ENCODE measurements at regions of chr1 and their contacts with region 1.

Region 1: DNA sequence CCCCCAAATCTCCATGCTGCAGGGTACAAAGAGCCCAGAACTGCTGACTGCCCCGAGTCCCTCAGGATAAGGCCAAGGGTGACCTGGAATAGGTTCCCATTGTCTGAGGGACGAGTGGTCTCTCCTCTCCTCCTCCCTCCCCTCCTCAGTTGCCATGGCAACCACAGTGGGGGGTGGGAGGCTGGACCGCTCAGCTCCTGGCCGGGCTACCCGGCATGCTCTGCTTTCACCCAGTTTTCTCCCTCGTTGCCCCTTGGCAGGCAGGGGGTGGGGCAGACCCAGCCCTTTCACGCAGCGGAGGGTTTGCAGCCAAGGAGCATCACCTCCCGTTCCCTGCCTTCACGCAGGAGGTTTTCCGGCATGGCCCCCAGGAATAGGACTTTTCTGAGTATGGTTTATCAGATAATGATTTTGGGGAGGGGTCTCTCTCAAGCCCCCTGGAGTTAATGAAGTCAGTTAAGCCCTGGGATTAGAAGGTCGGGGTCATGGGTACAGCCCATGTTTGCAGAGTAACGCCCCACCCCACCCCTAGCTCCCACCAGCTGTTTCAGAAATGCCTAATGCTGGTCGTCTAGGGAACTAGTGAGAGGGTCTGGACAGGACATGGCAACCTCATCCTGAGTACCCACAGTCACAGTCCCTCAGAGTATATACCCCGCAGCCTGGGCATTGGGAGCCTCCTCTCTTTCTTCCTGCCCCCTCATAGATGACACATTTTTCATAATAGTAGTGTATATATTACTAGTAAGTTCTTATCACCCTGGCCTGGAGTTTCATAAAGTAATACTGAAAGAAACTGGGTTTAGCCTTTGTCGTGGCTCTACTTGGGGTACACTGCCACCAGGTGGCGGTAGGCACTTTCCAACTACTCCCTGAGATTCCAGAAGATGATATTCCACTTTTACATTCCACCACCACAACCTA is 20.7 kb downstream of the C1QB start:
- DNase-seq: peak; percentile 49 to 52
- ATAC-seq: peak; percentile 61 to 86; a peak in 5 of 6 replicates
- H3K4me3 ChIP-seq: no peak overlapping the region
- H3K27ac ChIP-seq: no peak overlapping the region
- H3K4me1 ChIP-seq: 0 out of 3 replicates have a peak, but pooled peaks cover 4% of the 10 kb centered on the region
- CTCF ChIP-seq: peak; percentile 84
- EP300 ChIP-seq: no peak
- POLR2A ChIP-seq: no peak
- RAD21 ChIP-seq: peak; percentile 85 to 90

Region 2: DNA sequence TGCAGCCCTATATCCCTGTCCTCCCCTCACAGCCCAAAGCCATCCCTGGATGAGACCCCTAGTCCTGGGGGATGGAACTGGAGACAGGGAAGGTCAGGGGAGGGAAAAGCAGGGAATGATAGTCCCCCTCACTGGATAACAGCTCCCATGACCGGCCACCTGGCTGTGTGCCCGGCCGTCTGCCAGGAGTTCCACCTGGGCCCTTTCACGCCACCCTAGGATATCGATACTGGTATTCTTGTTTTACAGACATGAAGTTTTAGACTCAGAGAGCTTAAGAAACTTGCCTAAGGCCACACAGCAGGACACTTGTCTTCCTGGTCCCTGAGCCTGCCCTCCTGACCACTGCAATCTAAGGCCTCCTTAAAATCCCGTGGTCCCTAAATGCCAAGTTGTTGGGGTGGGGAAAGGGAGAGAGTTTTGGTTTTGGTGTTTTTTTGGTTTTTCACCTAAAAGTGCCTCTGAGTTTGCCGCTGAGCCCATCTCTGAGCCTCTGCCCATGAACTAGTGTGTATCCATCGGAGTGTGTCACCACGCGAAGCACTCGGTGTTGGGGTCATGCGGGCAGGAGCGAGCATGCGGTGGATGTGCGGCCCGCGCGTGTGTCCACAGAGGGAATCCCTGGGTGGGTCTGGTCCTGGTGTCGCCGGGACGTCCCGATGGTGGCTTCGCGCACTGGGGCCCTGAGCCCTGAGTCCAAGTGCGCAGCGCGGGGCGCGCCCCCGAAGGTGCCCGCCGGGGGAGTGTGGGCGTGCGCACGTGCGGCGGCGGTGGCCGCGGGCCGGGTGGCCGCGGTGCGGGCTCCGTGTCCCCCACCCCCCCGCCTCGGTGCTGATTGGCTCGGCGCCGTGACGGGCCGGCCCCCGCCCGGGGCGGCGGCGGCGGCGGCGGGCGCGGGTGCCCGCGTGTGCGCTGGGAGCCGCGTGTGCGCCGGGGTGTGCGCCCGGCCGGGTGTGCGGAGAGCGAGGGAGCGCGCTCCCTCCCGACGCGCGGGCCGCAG is 110.9 kb before region 1 on chr1 and contains the start of gene EPHA8:
- CTCF ChIA-PET with region 1: no interaction called
- POLR2A ChIA-PET with region 1: no interaction called
- DNase-seq: no peak
- ATAC-seq: no peak
- H3K4me3 ChIP-seq: peak within 1 kb of the TSS; percentile 27; the same call in 2 of the 3 replicates
- H3K27ac ChIP-seq: no peak within 1 kb of the TSS
- H3K4me1 ChIP-seq: no peaks in the 10 kb centered on the region
- CTCF ChIP-seq: no peak
- EP300 ChIP-seq: no peak
- POLR2A ChIP-seq: no peak
- RAD21 ChIP-seq: no peak
- polyA plus RNA-seq, gene EPHA8: not detected in 2 replicates

Region 3: DNA sequence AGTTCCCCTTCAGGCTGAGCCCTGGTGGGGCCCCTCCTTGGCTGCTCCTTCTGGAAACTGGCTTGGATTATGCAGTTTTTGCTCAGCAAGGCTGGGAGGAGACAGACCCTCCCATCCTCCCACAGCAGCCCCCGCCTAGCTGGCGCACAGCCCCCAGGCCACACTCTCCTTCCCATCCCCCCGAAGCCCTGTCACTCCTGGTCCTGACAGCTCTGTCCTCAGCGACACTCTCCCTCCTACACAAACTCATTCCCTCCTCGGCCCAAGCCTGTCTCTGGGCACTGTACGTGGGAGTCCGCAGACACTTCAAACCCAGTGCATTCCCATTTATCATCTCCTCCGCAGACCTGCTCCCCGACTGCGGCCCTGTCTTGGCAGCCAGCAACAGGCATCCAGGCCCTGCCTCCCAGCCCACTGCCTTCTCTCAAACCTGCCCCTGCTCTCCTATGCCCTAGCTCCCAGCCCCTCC is 11.9 kb after region 1 on chr1:
- CTCF ChIA-PET with region 1: interaction called, 14 read pairs
- POLR2A ChIA-PET with region 1: no interaction called
- DNase-seq: no peak
- ATAC-seq: no peak
- H3K4me3 ChIP-seq: no peak overlapping the region
- H3K27ac ChIP-seq: no peak overlapping the region
- H3K4me1 ChIP-seq: 0 out of 3 replicates have a peak, but pooled peaks cover 7% of the 10 kb centered on the region
- CTCF ChIP-seq: no peak
- EP300 ChIP-seq: no peak
- POLR2A ChIP-seq: no peak
- RAD21 ChIP-seq: no peak

Region 4: GRCh38 chr1:22889213-22889827 is 215.6 kb after region 1 on chr1:
- CTCF ChIA-PET with region 1: interaction called, 31 read pairs
- POLR2A ChIA-PET with region 1: no interaction called
- DNase-seq: peak; percentile 33 to 41
- ATAC-seq: peak; percentile 74 to 82; a peak in 4 of 6 replicates
- H3K4me3 ChIP-seq: no peak overlapping the region
- H3K27ac ChIP-seq: peak overlapping the region in 1 of 2 experiments; percentile 65; a peak in 2 of 6 replicates
- H3K4me1 ChIP-seq: no peaks in the 10 kb centered on the region
- CTCF ChIP-seq: peak; percentile 59
- EP300 ChIP-seq: no peak
- POLR2A ChIP-seq: no peak
- RAD21 ChIP-seq: peak; percentile 67 to 68

Region 5: DNA sequence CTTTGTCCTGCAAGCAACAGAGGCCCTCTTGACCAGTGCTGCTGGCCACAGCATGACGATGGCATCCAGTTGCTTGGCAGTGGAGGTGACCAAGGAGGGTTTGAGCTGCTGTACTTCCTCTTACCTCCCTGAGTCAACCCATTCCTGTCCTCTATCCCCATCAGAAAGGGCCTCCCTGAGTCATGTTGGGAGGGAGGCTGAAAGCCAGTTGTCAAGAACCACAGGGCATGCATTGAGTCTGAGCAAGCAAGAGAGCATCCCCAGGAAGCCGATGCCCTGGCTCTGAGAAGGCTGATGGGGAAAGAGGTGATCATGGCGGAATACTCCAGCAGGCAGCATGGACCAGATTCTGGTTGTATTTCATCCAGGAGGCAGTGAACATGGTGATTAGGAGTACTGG is 229.4 kb after region 1 on chr1:
- CTCF ChIA-PET with region 1: interaction called, 12 read pairs
- POLR2A ChIA-PET with region 1: no interaction called
- DNase-seq: no peak
- ATAC-seq: no peak
- H3K4me3 ChIP-seq: no peak overlapping the region
- H3K27ac ChIP-seq: no peak overlapping the region
- H3K4me1 ChIP-seq: no peaks in the 10 kb centered on the region
- CTCF ChIP-seq: no peak
- EP300 ChIP-seq: no peak
- POLR2A ChIP-seq: no peak
- RAD21 ChIP-seq: no peak

Region 6: DNA sequence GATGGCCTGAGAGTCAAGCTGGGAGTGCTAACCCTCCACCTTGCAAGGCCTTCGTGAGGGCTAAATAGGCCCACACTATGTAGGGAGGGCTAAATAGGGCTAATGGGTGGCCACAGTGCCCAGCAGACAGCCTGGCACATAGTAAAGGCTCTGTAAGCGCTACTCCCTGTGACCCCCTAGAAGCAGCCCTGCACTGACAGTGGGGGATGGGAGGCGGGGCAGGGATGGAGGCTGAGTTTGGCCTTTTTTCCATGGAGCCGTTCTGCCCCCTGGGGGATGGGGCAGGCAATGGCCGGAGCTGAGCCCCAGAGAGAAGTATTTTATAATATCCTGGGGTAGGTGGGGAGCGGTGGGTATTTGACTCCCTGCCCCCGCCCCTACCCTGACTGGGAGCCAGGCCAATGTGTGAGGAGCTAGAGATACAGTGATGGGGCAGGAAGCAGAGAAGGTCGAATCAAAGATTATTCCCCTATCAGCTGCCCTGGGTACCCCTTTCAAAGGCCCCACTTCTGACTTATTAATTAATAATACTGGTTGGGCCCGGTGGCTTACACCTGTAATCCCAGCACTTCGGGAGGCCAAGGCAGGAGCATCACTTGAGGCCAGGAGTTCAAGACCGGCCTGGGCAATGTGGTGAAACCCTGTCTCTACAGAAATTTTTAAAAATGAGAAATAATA is 256.6 kb after region 1 on chr1:
- CTCF ChIA-PET with region 1: interaction called, 129 read pairs
- POLR2A ChIA-PET with region 1: no interaction called
- DNase-seq: peak; percentile 34 to 82
- ATAC-seq: peak; percentile 80 to 91; a peak in 5 of 6 replicates
- H3K4me3 ChIP-seq: no peak overlapping the region
- H3K27ac ChIP-seq: no peak overlapping the region
- H3K4me1 ChIP-seq: no peaks in the 10 kb centered on the region
- CTCF ChIP-seq: peak; percentile 64
- EP300 ChIP-seq: no peak
- POLR2A ChIP-seq: no peak
- RAD21 ChIP-seq: peak; percentile 88 to 90

Region 7: GRCh38 chr1:22963044-22963677 is 289.4 kb after region 1 on chr1:
- CTCF ChIA-PET with region 1: interaction called, 38 read pairs
- POLR2A ChIA-PET with region 1: no interaction called
- DNase-seq: no peak
- ATAC-seq: no peak; a peak in 1 of 6 replicates
- H3K4me3 ChIP-seq: no peak overlapping the region
- H3K27ac ChIP-seq: no peak overlapping the region
- H3K4me1 ChIP-seq: no peaks in the 10 kb centered on the region
- CTCF ChIP-seq: no peak
- EP300 ChIP-seq: no peak
- POLR2A ChIP-seq: no peak
- RAD21 ChIP-seq: no peak

Measured in A549 (cell line).